ENCODE measurements at regions of chrX and their contacts with region 1.

Region 1: GRCh38 chrX:63402106-63402505 is 51.0 kb upstream of the SPIN4 start:
- DNase-seq: no peak
- ATAC-seq: no peak
- H3K4me3 Mint-ChIP-seq: no peak overlapping the region
- H3K27ac Mint-ChIP-seq: no peak overlapping the region
- H3K4me1 Mint-ChIP-seq: no peaks in the 10 kb centered on the region
- H3K27me3 Mint-ChIP-seq: no peaks in the 10 kb centered on the region

Region 2: DNA sequence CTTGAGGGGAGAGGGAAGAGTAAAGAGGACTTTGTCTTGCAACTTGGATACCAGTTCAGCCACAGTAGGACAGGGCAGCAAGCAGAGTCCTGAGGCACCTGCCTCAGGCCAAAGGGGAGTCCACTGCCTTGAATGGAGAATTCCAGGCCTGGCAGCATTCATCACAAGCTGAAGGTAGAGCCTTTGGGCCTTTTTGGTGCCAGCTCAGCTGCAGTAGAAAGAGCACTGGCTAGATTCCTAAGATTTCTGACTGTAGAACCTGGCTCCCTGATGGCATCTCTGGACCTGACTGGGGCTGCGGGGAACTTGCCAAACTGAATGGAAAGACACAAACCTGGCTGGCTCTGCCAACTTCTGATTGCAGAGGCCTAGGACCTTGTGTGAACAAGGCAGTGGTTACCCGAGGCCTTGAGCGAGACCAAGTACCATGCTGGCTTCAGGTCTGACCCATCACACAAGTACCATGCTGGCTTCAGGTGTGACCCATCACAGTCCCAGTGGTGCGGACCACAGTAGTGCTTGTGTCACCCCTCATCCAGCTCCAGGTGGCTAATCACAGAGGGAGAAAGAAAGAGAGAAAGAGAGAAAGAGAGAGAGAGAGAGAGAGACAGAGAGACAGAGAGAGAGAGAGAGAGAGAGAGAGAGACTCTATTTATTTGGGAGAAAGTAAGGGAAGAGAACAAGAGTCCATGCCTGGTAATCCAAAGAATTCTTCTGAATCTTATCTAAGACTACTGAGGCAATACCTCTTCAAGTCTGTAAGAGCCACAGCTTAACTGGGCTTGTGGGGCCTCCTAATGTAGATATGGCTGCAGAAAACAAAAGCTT is 86.7 kb after region 1 on chrX:
- CTCF ChIA-PET with region 1: no interaction called
- POLR2A ChIA-PET with region 1: no interaction called
- intact Hi-C with region 1: loop called in 1 of 2 experiments (anchors 5 kb)
- DNase-seq: no peak
- ATAC-seq: no peak
- H3K4me3 Mint-ChIP-seq: no peak overlapping the region
- H3K27ac Mint-ChIP-seq: no peak overlapping the region
- H3K4me1 Mint-ChIP-seq: peaks cover 4% of the 10 kb centered on the region
- H3K27me3 Mint-ChIP-seq: no peaks in the 10 kb centered on the region

Measured in activated CD4-positive, alpha-beta T cell treated with anti-CD3 and anti-CD28 coated beads for 36 hours (primary cell).